ENCODE measurements at regions of chr3 and their contacts with region 1.

Region 1: GRCh38 chr3:11185564-11186317 is 31.4 kb downstream of the HRH1 start:
- DNase-seq: peak; percentile 99
- ATAC-seq: peak; percentile 88
- H3K4me3 ChIP-seq: peak overlapping the region; percentile 62
- H3K27ac ChIP-seq: peak overlapping the region; percentile 78
- H3K4me1 ChIP-seq: peaks cover 28% of the 10 kb centered on the region
- H3K27me3 ChIP-seq: no peaks in the 10 kb centered on the region
- CTCF ChIP-seq: peak; percentile 53

Region 2: GRCh38 chr3:11145888-11146287 is 39.9 kb before region 1 on chr3:
- CTCF ChIA-PET with region 1: no interaction called
- POLR2A ChIA-PET with region 1: no interaction called
- intact Hi-C with region 1: loop called (anchors 1 kb)
- DNase-seq: peak; percentile 96
- ATAC-seq: peak; percentile 80
- H3K4me3 ChIP-seq: peak overlapping the region; percentile 1; the same call in 1 of the 2 replicates
- H3K27ac ChIP-seq: peak overlapping the region; percentile 90
- H3K4me1 ChIP-seq: peaks cover 34% of the 10 kb centered on the region
- H3K27me3 ChIP-seq: no peaks in the 10 kb centered on the region
- CTCF ChIP-seq: no peak

Region 3: GRCh38 chr3:11195721-11196332 is 10.1 kb after region 1 on chr3:
- CTCF ChIA-PET with region 1: interaction called, 8 read pairs
- POLR2A ChIA-PET with region 1: no interaction called
- intact Hi-C with region 1: loop called (anchors 1 kb)
- DNase-seq: peak; percentile 36
- ATAC-seq: peak; percentile 43
- H3K4me3 ChIP-seq: peak overlapping the region; percentile 36; the same call in 1 of the 2 replicates
- H3K27ac ChIP-seq: peak overlapping the region; percentile 89
- H3K4me1 ChIP-seq: peaks cover 37% of the 10 kb centered on the region
- H3K27me3 ChIP-seq: no peaks in the 10 kb centered on the region
- CTCF ChIP-seq: no peak

Region 4: GRCh38 chr3:11201246-11202024 is 15.7 kb after region 1 on chr3:
- CTCF ChIA-PET with region 1: interaction called, 4 read pairs
- POLR2A ChIA-PET with region 1: no interaction called
- intact Hi-C with region 1: loop called (anchors 1 kb)
- DNase-seq: peak; percentile 81
- ATAC-seq: peak; percentile 81
- H3K4me3 ChIP-seq: no peak overlapping the region
- H3K27ac ChIP-seq: peak overlapping the region; percentile 55
- H3K4me1 ChIP-seq: peaks cover 33% of the 10 kb centered on the region
- H3K27me3 ChIP-seq: no peaks in the 10 kb centered on the region
- CTCF ChIP-seq: no peak

Measured in PC-3 (cell line).